AG04449 (cell line): ENCODE measurements at regions of chr12 and their contacts with region 1.

Region 1: GRCh38 chr12:27733052-27733656 is 22.5 kb downstream of the MRPS35 start:
- DNase-seq: no peak
- H3K4me3 ChIP-seq: no peak overlapping the region
- CTCF ChIP-seq: peak; percentile 79

Region 2: DNA sequence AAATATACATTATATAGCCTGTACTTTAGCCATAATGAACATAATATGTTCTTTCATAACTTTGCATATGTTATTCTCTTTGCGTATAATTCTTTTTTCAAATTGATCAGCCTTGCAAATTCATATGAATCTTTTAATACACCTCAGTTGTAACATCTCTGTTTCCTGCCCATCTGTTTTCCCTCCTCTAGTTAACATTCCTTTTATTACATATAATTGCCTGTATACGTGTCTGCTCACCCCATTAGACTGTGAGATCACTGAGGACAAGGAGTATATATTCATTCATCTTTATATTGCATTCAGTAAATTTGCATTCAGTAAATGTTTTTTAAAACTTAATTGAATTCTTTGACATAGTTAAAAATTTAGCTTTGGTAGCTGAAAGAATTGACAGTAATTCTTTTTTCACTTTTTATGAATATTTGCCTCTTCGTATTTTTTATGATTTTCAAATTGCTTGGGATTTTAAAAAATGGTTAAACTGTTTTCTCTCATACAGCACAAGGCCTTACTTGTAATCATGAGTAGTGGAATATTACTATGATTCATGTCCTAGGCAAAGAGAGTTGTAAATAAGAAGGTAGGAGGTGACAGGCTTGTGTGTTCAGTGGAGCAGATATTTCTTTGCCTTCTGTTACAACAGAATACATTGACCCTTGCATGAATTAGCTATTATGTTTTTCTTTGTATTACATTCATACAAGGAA is 14.1 kb after region 1 on chr12:
- CTCF ChIA-PET with region 1: interaction called, 28 read pairs
- POLR2A ChIA-PET with region 1: no interaction called
- DNase-seq: no peak
- H3K4me3 ChIP-seq: no peak overlapping the region
- CTCF ChIP-seq: no peak

Region 3: DNA sequence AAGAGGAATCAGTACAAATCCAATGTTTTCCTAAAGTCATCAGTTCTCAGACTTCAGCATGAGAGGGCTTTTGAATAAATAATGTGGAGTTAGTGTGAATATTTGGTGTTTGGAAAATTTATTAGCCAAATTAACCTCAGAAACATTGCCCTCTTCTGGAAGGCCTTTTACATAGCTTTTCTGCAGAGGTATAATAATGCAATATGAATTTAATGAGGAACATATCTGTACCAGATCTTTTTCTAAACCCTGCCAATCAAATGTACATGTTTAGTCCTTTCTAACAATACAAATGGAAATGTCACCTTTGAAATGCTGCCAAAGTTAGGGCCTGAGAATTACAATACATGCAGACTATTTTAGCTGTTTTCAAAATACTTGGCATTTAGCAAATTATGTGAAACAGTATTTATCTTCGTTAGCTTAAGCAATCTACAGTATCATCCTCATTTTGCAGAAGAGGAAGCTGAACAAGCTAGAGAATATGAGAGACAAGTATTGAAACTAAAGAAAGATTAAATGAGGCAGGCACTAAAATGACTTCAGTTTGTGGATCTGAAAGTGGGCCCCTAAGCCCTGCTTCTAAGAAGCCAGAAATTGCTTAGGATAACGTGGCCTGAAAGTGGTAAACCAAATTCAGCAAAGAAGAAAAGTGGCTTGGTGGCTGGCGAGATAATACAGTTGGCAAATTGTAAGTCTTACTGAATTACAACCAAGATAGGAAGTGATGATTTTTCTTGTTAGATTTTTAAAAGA is 107.3 kb after region 1 on chr12:
- CTCF ChIA-PET with region 1: interaction called, 17 read pairs
- POLR2A ChIA-PET with region 1: no interaction called
- DNase-seq: no peak
- H3K4me3 ChIP-seq: no peak overlapping the region
- CTCF ChIP-seq: peak; percentile 32

Region 4: GRCh38 chr12:27946421-27946820 is 213.3 kb after region 1 on chr12:
- CTCF ChIA-PET with region 1: interaction called, 59 read pairs
- POLR2A ChIA-PET with region 1: no interaction called
- DNase-seq: no peak
- H3K4me3 ChIP-seq: no peak overlapping the region
- CTCF ChIP-seq: no peak

Region 5: GRCh38 chr12:28172434-28173030 is 439.4 kb after region 1 on chr12:
- CTCF ChIA-PET with region 1: interaction called, 10 read pairs
- POLR2A ChIA-PET with region 1: no interaction called
- DNase-seq: peak; percentile 24
- H3K4me3 ChIP-seq: no peak overlapping the region
- CTCF ChIP-seq: peak; percentile 66